ENCODE measurements at regions of chr15 and their contacts with region 1.

Region 1: DNA sequence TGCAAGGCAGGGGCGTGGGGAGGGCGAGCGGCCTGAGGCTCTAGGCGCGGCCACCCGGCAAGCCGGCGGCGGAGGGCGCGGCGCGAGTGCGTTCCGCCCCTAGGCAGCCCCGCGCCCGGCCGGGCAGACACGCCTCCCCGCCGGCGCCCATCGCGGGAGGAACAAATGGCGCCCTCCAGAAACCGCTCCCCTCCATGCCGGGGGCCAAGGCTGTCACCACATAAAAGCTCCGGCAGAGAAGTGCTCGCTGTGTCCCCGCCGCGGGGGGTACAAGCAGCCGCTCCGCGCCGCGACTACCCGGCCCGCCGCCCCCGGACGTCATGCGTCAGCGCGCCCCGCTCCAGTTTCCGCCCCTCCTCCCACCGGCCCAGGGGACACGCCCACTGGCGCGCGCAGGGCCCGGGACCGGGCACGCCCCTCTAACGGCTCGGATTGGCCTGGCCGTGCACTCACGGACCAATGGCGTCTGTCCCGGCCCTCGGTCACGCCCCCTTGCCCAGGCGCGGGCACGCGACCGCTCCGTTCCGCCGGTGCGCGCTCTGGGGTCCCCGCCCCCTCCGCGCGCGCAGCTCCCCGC is 391 bp upstream of the KLF13 start:
- DNase-seq: peak; percentile 100
- ATAC-seq: peak; percentile 83
- H3K4me3 Mint-ChIP-seq: peak overlapping the region; percentile 85
- H3K27ac Mint-ChIP-seq: no peak overlapping the region
- H3K4me1 Mint-ChIP-seq: peaks cover 37% of the 10 kb centered on the region
- H3K27me3 Mint-ChIP-seq: no peaks in the 10 kb centered on the region

Region 2: GRCh38 chr15:30991255-30992072 is 334.8 kb before region 1 on chr15 and contains the start of gene MTMR10:
- CTCF ChIA-PET with region 1: no interaction called
- POLR2A ChIA-PET with region 1: no interaction called
- intact Hi-C with region 1: loop called in 1 of 2 experiments (anchors 1 kb)
- DNase-seq: peak; percentile 80
- ATAC-seq: peak; percentile 93
- H3K4me3 Mint-ChIP-seq: peak within 1 kb of the TSS; percentile 95
- H3K27ac Mint-ChIP-seq: peak within 1 kb of the TSS; percentile 84
- H3K4me1 Mint-ChIP-seq: peaks cover 27% of the 10 kb centered on the region
- H3K27me3 Mint-ChIP-seq: peaks cover 1% of the 10 kb centered on the region
- total RNA-seq, gene MTMR10: 10.1 to 17.6 TPM

Region 3: GRCh38 chr15:31265871-31266711 is 60.2 kb before region 1 on chr15:
- CTCF ChIA-PET with region 1: no interaction called
- POLR2A ChIA-PET with region 1: interaction called, 3 read pairs
- intact Hi-C with region 1: loop called (anchors 1 to 5 kb)
- DNase-seq: peak; percentile 78
- ATAC-seq: peak; percentile 75
- H3K4me3 Mint-ChIP-seq: peak overlapping the region; percentile 11
- H3K27ac Mint-ChIP-seq: peak overlapping the region; percentile 77
- H3K4me1 Mint-ChIP-seq: peaks cover 78% of the 10 kb centered on the region
- H3K27me3 Mint-ChIP-seq: peaks cover 2% of the 10 kb centered on the region

Region 4: DNA sequence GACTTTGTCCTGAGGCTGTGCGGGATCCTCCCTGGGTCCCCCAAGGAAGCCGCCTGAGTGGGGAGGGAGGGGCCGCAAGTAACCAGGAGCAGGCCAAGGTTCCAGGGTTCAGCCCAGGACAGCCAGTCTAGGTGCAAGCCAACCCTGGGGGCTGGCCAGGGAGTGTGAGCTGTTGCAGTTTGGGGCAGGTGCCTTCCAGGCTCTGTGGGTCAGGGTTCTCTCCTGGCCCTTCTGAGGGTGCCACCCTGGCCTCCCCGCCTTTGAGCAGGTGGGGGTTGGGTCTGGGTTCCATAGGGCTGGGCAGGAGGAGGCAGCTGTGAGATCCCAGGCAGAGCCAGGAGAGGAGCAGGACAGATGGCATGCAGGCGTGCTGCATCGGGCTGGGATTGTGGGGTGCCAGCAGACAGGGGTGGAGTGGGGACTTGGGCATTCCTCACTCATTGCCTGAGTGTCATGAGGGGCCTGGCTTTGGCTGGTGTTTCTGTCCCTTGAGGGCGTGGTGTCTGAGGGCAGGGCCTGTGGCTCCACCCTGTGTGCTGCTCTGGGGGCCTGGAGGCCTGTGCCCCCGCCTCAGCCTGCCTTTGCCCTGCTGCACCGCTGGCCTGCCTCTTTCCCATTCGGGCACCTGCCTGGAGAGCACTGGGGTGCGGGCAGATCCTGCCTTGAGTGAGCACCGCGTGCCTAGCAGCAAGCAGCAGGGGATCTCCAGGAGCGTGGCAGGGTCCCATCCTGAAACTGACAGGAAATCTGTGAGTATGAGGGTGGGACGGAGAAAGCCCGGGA is 18.8 kb after region 1 on chr15:
- CTCF ChIA-PET with region 1: interaction called, 10 read pairs
- POLR2A ChIA-PET with region 1: interaction called, 7 read pairs
- intact Hi-C with region 1: loop called (anchors 1 to 2 kb)
- DNase-seq: peak; percentile 65
- ATAC-seq: peak; percentile 12
- H3K4me3 Mint-ChIP-seq: peak overlapping the region; percentile 87
- H3K27ac Mint-ChIP-seq: peak overlapping the region; percentile 97
- H3K4me1 Mint-ChIP-seq: peaks cover 97% of the 10 kb centered on the region
- H3K27me3 Mint-ChIP-seq: no peaks in the 10 kb centered on the region

Region 5: GRCh38 chr15:31391687-31392671 is 65.7 kb after region 1 on chr15:
- CTCF ChIA-PET with region 1: no interaction called
- POLR2A ChIA-PET with region 1: no interaction called
- intact Hi-C with region 1: loop called in 1 of 2 experiments (anchors 1 kb)
- DNase-seq: peak; percentile 90
- ATAC-seq: peak; percentile 92
- H3K4me3 Mint-ChIP-seq: peak overlapping the region; percentile 80
- H3K27ac Mint-ChIP-seq: peak overlapping the region; percentile 71
- H3K4me1 Mint-ChIP-seq: peaks cover 40% of the 10 kb centered on the region
- H3K27me3 Mint-ChIP-seq: no peaks in the 10 kb centered on the region

Region 6: GRCh38 chr15:31419820-31420219 is 93.6 kb after region 1 on chr15:
- CTCF ChIA-PET with region 1: no interaction called
- POLR2A ChIA-PET with region 1: no interaction called
- intact Hi-C with region 1: no loop called
- DNase-seq: no peak
- ATAC-seq: no peak
- H3K4me3 Mint-ChIP-seq: no peak overlapping the region
- H3K27ac Mint-ChIP-seq: no peak overlapping the region
- H3K4me1 Mint-ChIP-seq: no peaks in the 10 kb centered on the region
- H3K27me3 Mint-ChIP-seq: no peaks in the 10 kb centered on the region

Measured in activated CD4-positive, alpha-beta T cell treated with anti-CD3 and anti-CD28 coated beads for 36 hours (primary cell).